Sciatic nerve (tissue), 2 donors: ENCODE measurements at regions of chr18 and their contacts with region 1.

Region 1: GRCh38 chr18:54521846-54522245 is 69.2 kb upstream of the DYNAP start:
- DNase-seq: no peak
- ATAC-seq: no peak

Region 2: GRCh38 chr18:54558609-54559585 is 37.1 kb after region 1 on chr18:
- intact Hi-C with region 1: no loop called
- DNase-seq: no peak
- ATAC-seq: no peak

Region 3: GRCh38 chr18:55988537-55988936 is 1466.7 kb after region 1 on chr18:
- intact Hi-C with region 1: loop called (anchors 5 kb)
- DNase-seq: no peak
- ATAC-seq: peak; percentile 73